CD4-positive, alpha-beta T cell (primary cell): ENCODE measurements at regions of chr1 and their contacts with region 1.

Region 1: DNA sequence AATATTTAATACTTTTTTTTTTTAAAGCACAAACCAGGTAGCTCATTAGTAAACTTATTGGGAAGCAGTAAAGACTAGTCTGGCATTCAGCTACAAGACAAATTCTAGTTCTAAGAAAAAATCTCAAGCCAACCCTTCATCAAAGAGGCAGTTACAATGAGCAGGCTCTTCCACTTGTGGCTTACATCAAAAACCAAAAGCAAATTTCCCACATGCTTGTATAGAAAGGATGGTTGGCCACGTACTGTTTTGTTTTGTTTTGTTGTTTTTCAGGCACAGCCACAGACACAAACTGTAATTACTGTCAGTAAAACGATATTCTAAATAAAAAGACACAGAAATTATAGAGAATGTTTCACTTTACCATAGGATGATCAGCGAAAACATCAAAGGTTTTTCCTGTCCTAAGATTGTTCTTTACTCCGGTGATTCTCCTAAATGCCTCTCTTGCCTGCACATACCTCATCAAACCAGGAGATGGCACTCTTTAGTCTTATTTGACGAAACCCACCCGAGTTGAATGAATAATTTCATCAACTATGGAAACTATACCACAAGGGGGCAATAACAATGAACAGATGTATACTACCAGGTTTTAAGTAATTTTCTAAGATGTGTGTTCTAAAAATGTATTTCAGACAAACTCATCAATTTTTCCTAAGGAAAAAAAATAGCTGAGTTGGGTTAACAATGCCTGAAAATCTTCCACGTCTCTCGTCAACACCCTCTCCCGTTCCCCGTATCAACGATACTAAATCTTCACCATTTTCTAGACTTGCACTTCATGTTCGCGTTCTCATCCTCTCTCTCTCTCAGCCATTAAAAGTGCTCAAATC is 26.9 kb downstream of the RPL5 start:
- DNase-seq: peak in 10 of 14 experiments; percentile 22 to 88 (median 44)
- ATAC-seq: peak; percentile 96
- H3K4me3 ChIP-seq: peak overlapping the region; percentile 34
- H3K4me3 Mint-ChIP-seq: peak overlapping the region; percentile 52
- H3K27ac ChIP-seq: peak overlapping the region in 1 of 2 donors; percentile 1
- H3K27ac Mint-ChIP-seq: peak overlapping the region; percentile 72
- H3K4me1 ChIP-seq: peaks cover 12% of the 10 kb centered on the region
- H3K4me1 Mint-ChIP-seq: peaks cover 14% of the 10 kb centered on the region
- H3K27me3 ChIP-seq: no peaks in the 10 kb centered on the region
- H3K27me3 Mint-ChIP-seq: no peaks in the 10 kb centered on the region
- CTCF ChIP-seq: peak; percentile 99

Region 2: DNA sequence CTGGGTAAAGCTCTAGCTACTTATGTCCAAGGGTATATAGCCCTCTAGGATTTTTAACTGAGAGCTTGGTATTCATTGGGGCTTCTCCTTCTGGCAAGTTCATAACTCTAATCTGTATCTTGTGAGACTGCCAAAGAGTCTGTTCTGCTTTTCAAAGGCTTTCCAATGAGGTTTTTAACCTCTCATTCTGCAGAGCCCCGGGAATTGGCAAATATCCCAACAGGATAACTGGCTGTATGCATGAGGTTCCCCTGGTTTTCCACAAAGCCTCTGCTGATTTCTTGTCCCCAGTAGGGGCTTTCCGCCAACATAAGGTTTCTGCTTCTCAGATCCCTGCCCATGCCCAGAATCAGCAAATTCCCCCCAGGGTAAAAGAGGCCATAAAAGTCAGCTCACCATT is 13.9 kb after region 1 on chr1:
- CTCF ChIA-PET with region 1: interaction called, 17 read pairs
- POLR2A ChIA-PET with region 1: interaction called, 4 read pairs
- intact Hi-C with region 1: no loop called
- DNase-seq: no peak
- ATAC-seq: no peak
- H3K4me3 ChIP-seq: no peak overlapping the region
- H3K4me3 Mint-ChIP-seq: no peak overlapping the region
- H3K27ac ChIP-seq: no peak overlapping the region
- H3K27ac Mint-ChIP-seq: no peak overlapping the region
- H3K4me1 ChIP-seq: no peaks in the 10 kb centered on the region
- H3K4me1 Mint-ChIP-seq: peaks cover 32% of the 10 kb centered on the region
- H3K27me3 ChIP-seq: no peaks in the 10 kb centered on the region
- H3K27me3 Mint-ChIP-seq: no peaks in the 10 kb centered on the region
- CTCF ChIP-seq: no peak

Region 3: GRCh38 chr1:93061895-93062792 is 203.4 kb after region 1 on chr1:
- CTCF ChIA-PET with region 1: interaction called, 4 read pairs
- POLR2A ChIA-PET with region 1: no interaction called
- intact Hi-C with region 1: loop called (anchors 1 to 5 kb)
- DNase-seq: peak in 12 of 14 experiments; percentile 14 to 74 (median 28)
- ATAC-seq: peak; percentile 71
- H3K4me3 ChIP-seq: no peak overlapping the region
- H3K4me3 Mint-ChIP-seq: no peak overlapping the region
- H3K27ac ChIP-seq: no peak overlapping the region
- H3K27ac Mint-ChIP-seq: no peak overlapping the region
- H3K4me1 ChIP-seq: peaks cover 3% of the 10 kb centered on the region
- H3K4me1 Mint-ChIP-seq: no peaks in the 10 kb centered on the region
- H3K27me3 ChIP-seq: peaks cover 0 to 2% of the 10 kb centered on the region in 2 experiments
- H3K27me3 Mint-ChIP-seq: peaks cover 4% of the 10 kb centered on the region
- CTCF ChIP-seq: peak; percentile 53